ENCODE measurements at regions of chr6 and their contacts with region 1.

Region 1: GRCh38 chr6:149723771-149724417 is 6.0 kb upstream of the LATS1 start:
- DNase-seq: peak; percentile 55 to 62
- H3K4me3 ChIP-seq: no peak overlapping the region
- H3K4me3 Mint-ChIP-seq: no peak overlapping the region
- H3K27ac Mint-ChIP-seq: no peak overlapping the region
- H3K4me1 ChIP-seq: peaks cover 9% of the 10 kb centered on the region
- H3K4me1 Mint-ChIP-seq: peaks cover 14% of the 10 kb centered on the region
- H3K27me3 ChIP-seq: no peaks in the 10 kb centered on the region
- H3K27me3 Mint-ChIP-seq: no peaks in the 10 kb centered on the region
- CTCF ChIP-seq: peak; percentile 73 to 84

Region 2: DNA sequence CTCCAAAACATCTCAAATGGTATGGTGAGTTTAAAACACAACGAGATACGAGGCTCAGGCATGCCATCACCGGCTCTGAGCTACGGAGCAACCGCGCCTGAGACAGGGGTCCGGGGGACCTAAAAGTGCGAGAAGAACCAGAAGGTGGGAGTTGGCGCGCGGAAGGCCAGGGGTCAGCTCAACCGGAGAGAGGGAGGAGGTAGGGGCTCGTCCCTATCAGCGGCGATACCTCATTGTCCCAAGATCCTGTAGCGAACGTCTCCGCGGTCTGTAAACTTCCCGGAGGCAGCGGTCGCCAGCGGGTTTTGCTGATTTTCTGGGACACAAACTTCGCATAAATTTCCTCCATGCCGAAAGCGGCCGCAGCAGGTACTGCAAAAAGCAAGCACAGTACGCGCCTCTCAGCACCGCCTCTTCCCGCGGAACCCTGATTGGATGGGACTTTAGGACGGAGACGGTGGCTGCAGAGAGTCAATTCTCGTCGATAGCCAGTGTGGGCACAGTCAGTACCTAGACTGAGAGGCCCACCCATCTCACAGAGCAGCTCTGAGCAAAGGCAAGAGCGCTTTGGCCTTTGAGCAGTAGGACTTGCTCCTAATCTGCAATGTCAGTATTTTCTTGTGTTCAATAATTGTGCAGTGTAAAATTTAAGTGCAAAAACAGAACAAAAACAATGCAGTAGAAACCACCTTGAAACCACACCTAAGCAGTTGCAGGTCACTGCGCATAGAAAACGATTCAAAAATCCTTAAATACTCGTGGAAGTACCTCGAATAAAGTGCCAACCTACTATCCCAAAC is 22.5 kb after region 1 on chr6 and contains the start of gene NUP43:
- CTCF ChIA-PET with region 1: interaction called, 7 read pairs
- POLR2A ChIA-PET with region 1: no interaction called
- intact Hi-C with region 1: loop called (anchors 1 kb)
- DNase-seq: peak; percentile 94 to 96
- H3K4me3 ChIP-seq: peak within 1 kb of the TSS; percentile 68
- H3K4me3 Mint-ChIP-seq: peak within 1 kb of the TSS; percentile 97
- H3K27ac Mint-ChIP-seq: peak within 1 kb of the TSS; percentile 92
- H3K4me1 ChIP-seq: peaks cover 4% of the 10 kb centered on the region; the same call in 1 of the 2 replicates
- H3K4me1 Mint-ChIP-seq: peaks cover 9% of the 10 kb centered on the region
- H3K27me3 ChIP-seq: no peaks in the 10 kb centered on the region
- H3K27me3 Mint-ChIP-seq: no peaks in the 10 kb centered on the region
- CTCF ChIP-seq: peak; percentile 34 to 53
- total RNA-seq, gene NUP43: 64.2 and 65.2 TPM in 2 replicates

Region 3: DNA sequence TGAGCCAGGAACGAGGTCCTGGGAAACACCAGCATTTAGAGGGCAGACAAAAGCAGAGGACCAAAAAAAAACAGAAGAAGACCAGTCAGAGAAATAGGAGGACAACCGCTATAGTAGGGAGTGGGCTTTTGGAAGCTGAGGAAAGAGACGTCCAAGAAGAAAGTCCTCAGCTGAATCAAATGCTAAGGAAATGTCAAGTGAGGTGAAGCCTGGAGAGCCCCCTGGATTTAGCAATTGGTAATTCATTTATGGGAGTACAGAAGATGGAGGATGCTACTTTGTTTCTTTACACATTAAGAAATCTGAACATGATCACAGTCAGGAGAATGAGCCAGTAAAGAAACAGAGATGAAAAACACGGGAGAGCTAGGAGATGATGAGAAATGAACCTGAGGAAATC is 99.1 kb after region 1 on chr6:
- CTCF ChIA-PET with region 1: no interaction called
- POLR2A ChIA-PET with region 1: interaction called, 3 read pairs
- intact Hi-C with region 1: loop called (anchors 5 kb)
- DNase-seq: no peak
- H3K4me3 ChIP-seq: no peak overlapping the region
- H3K4me3 Mint-ChIP-seq: no peak overlapping the region
- H3K27ac Mint-ChIP-seq: no peak overlapping the region
- H3K4me1 ChIP-seq: no peaks in the 10 kb centered on the region
- H3K4me1 Mint-ChIP-seq: peaks cover 6% of the 10 kb centered on the region
- H3K27me3 ChIP-seq: no peaks in the 10 kb centered on the region
- H3K27me3 Mint-ChIP-seq: no peaks in the 10 kb centered on the region
- CTCF ChIP-seq: peak in 1 of 2 experiments; percentile 22